MCF 10A (cell line): ENCODE measurements at regions of chr2 and their contacts with region 1.

Region 1: DNA sequence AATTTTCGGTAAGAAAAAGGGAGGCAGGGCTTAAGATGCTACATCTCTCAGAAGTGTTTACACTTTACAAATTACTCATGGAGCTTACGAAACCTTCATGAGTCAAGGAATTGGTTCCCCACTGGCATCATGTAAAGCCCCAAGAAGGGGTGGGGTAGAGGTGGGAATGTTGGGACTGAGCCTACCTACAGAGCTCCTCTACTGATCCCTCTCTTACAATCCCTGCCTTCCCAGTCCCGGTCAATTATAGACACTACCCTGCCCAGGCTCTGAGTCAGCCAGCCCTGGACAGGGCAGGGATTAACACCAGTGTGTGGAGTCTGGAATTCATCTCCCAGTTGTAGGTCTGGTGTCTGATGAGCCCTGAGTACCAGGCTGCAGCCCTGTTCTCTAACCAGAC is 248.9 kb downstream of the PAX3 start:
- DNase-seq: peak; percentile 86
- H3K4me3 Mint-ChIP-seq: no peak overlapping the region
- H3K27ac Mint-ChIP-seq: no peak overlapping the region
- H3K4me1 Mint-ChIP-seq: peaks cover 31% of the 10 kb centered on the region
- H3K27me3 Mint-ChIP-seq: peaks cover 73% of the 10 kb centered on the region
- CTCF ChIP-seq: no peak

Region 2: GRCh38 chr2:222038067-222038802 is 11.7 kb before region 1 on chr2:
- CTCF ChIA-PET with region 1: interaction called, 27 read pairs
- POLR2A ChIA-PET with region 1: interaction called, 12 read pairs
- intact Hi-C with region 1: no loop called
- DNase-seq: peak; percentile 43
- H3K4me3 Mint-ChIP-seq: no peak overlapping the region
- H3K27ac Mint-ChIP-seq: no peak overlapping the region
- H3K4me1 Mint-ChIP-seq: peaks cover 6% of the 10 kb centered on the region
- H3K27me3 Mint-ChIP-seq: no peaks in the 10 kb centered on the region
- CTCF ChIP-seq: peak; percentile 39

Region 3: GRCh38 chr2:222332116-222332515 is 282.2 kb after region 1 on chr2:
- CTCF ChIA-PET with region 1: no interaction called
- POLR2A ChIA-PET with region 1: no interaction called
- intact Hi-C with region 1: no loop called
- DNase-seq: no peak
- H3K4me3 Mint-ChIP-seq: no peak overlapping the region
- H3K27ac Mint-ChIP-seq: no peak overlapping the region
- H3K4me1 Mint-ChIP-seq: peaks cover 5% of the 10 kb centered on the region
- H3K27me3 Mint-ChIP-seq: no peaks in the 10 kb centered on the region
- CTCF ChIP-seq: no peak